GM13976 (cell line): ENCODE measurements at regions of chr10 and their contacts with region 1.

Region 1: GRCh38 chr10:95363303-95363912 is 72.6 kb upstream of the PDLIM1 start:
- DNase-seq: peak; percentile 72
- CTCF ChIP-seq: peak; percentile 85

Region 2: DNA sequence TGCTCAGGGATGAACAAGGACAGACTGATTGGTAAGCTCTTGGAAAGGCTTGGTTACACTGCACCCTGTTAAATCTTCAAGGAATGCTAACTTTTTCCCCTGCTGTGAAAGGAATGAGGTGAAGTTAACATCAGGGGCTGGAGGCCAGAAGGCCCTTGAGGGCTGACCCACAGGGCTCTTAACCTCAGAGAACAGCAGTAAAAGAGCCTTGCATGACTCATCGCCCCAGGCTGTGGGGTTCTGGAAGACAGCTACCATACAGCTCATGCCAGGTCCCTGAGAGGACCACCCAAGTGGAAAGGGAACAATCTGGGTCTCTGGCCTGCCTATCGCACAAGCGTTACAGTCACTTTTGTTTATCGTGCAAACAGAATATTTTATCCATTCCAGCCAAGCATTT is 370.6 kb before region 1 on chr10:
- in situ Hi-C with region 1: no loop called
- DNase-seq: no peak
- CTCF ChIP-seq: no peak

Region 3: DNA sequence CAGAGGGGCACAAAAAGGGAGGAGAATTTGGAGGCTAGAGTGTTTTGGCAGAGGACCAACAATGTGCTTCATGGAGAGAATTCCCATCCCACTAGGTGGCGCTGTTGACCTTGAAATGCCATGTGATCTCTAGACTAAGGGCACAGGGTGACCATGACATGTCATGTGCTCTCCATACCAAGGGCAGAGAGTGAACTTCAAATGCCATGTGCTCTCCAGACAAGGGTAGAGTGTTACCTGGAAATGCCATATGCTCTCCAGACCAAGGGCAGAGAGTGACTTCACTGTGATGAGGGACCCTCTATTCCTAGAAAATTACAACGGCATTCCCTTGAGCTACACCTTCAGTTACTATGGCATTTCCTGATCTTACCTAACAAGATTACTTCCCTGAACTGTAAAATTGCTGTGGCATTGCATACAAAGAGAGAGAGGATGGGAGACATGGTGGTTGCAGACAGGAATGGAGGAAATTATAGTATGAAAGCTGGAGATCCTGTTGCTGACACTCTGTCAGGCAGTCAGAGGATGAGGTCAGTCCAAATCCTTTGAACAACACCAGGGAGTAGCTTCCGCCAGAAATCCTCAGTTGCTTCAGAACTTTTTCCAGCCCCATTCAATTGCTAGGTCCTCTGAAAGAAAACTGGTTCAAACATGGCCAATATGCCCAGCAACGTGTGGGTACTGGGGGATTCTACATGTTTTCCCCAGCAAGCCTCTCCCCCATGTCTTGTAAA is 230.2 kb before region 1 on chr10:
- in situ Hi-C with region 1: loop called (anchors 5 kb)
- DNase-seq: peak; percentile 49
- CTCF ChIP-seq: peak; percentile 62

Region 4: GRCh38 chr10:95193944-95194343 is 169.5 kb before region 1 on chr10 and contains the start of gene ACSM6:
- in situ Hi-C with region 1: loop called (anchors 5 kb)
- DNase-seq: no peak
- CTCF ChIP-seq: no peak

Region 5: GRCh38 chr10:95254629-95255028 is 108.8 kb before region 1 on chr10:
- in situ Hi-C with region 1: loop called (anchors 10 kb)
- DNase-seq: no peak
- CTCF ChIP-seq: no peak